H1 (cell line): ENCODE measurements at regions of chr15 and their contacts with region 1.

Region 1: GRCh38 chr15:94324117-94324826 is 92.9 kb downstream of the MCTP2 start:
- DNase-seq: peak; percentile 19 to 54
- H3K4me3 ChIP-seq: no peak overlapping the region
- H3K27ac ChIP-seq: no peak overlapping the region
- H3K4me1 ChIP-seq: no peaks in the 10 kb centered on the region
- H3K27me3 ChIP-seq: no peaks in the 10 kb centered on the region
- CTCF ChIP-seq: peak; percentile 45 to 91 (median 89)
- EP300 ChIP-seq: no peak
- POLR2A ChIP-seq: no peak
- RAD21 ChIP-seq: peak; percentile 94 to 98

Region 2: GRCh38 chr15:94174399-94174802 is 149.9 kb before region 1 on chr15:
- CTCF ChIA-PET with region 1: interaction called, 10 read pairs
- POLR2A ChIA-PET with region 1: no interaction called
- DNase-seq: no peak
- H3K4me3 ChIP-seq: no peak overlapping the region
- H3K27ac ChIP-seq: no peak overlapping the region
- H3K4me1 ChIP-seq: no peaks in the 10 kb centered on the region
- H3K27me3 ChIP-seq: no peaks in the 10 kb centered on the region
- CTCF ChIP-seq: no peak
- EP300 ChIP-seq: no peak
- POLR2A ChIP-seq: no peak
- RAD21 ChIP-seq: no peak

Region 3: GRCh38 chr15:94238539-94239118 is 85.6 kb before region 1 on chr15:
- CTCF ChIA-PET with region 1: interaction called, 20 read pairs
- POLR2A ChIA-PET with region 1: no interaction called
- DNase-seq: no peak
- H3K4me3 ChIP-seq: no peak overlapping the region
- H3K27ac ChIP-seq: no peak overlapping the region
- H3K4me1 ChIP-seq: no peaks in the 10 kb centered on the region; a peak in 1 of 7 replicates
- H3K27me3 ChIP-seq: no peaks in the 10 kb centered on the region
- CTCF ChIP-seq: no peak
- EP300 ChIP-seq: no peak
- POLR2A ChIP-seq: no peak
- RAD21 ChIP-seq: no peak

Region 4: GRCh38 chr15:94306700-94307650 is 17.3 kb before region 1 on chr15:
- CTCF ChIA-PET with region 1: interaction called, 18 read pairs
- POLR2A ChIA-PET with region 1: no interaction called
- DNase-seq: no peak
- H3K4me3 ChIP-seq: no peak overlapping the region
- H3K27ac ChIP-seq: no peak overlapping the region
- H3K4me1 ChIP-seq: no peaks in the 10 kb centered on the region
- H3K27me3 ChIP-seq: no peaks in the 10 kb centered on the region
- CTCF ChIP-seq: no peak
- EP300 ChIP-seq: no peak
- POLR2A ChIP-seq: no peak
- RAD21 ChIP-seq: no peak

Region 5: GRCh38 chr15:94346282-94346681 is 22.0 kb after region 1 on chr15:
- CTCF ChIA-PET with region 1: interaction called, 18 read pairs
- POLR2A ChIA-PET with region 1: no interaction called
- DNase-seq: no peak
- H3K4me3 ChIP-seq: no peak overlapping the region
- H3K27ac ChIP-seq: no peak overlapping the region
- H3K4me1 ChIP-seq: no peaks in the 10 kb centered on the region
- H3K27me3 ChIP-seq: no peaks in the 10 kb centered on the region
- CTCF ChIP-seq: no peak
- EP300 ChIP-seq: no peak
- POLR2A ChIP-seq: no peak
- RAD21 ChIP-seq: no peak

Region 6: GRCh38 chr15:94460624-94461023 is 136.4 kb after region 1 on chr15:
- CTCF ChIA-PET with region 1: no interaction called
- POLR2A ChIA-PET with region 1: no interaction called
- DNase-seq: no peak
- H3K4me3 ChIP-seq: no peak overlapping the region
- H3K27ac ChIP-seq: no peak overlapping the region
- H3K4me1 ChIP-seq: no peaks in the 10 kb centered on the region
- H3K27me3 ChIP-seq: no peaks in the 10 kb centered on the region
- CTCF ChIP-seq: no peak
- EP300 ChIP-seq: no peak
- POLR2A ChIP-seq: no peak
- RAD21 ChIP-seq: no peak